K562 (cell line): ENCODE measurements at regions of chr7 and their contacts with region 1.

Region 1: DNA sequence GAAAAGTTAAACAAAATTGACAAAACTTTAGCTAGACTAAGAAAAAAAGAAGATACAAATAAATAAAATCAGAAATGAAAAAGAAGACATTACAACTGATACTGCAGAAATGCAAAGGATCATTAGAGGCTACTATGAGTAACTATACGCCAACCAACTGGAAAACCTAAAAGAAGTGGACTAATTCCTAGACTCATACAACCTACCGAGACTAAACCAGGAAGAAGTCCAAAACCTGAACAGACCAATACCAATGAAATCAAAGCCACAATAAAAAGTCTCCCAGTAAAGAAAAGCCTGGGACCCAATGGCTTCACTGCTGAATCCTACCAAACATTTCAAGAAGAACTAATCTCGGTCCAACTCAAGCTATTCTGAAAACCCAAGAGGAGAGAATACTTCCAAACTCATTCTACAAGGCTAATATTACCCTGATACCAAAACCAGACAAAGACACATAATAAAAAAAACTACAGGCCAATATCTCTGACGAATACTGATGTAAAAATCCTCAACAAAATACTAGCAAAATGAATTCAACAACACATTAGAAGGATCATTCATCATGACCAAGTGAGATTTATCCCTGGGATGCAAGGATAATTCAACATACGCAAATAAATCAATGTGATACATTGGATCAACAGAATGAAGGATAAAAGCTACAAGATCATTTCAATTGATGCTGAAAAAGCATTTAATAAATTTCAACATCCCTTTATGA is 20.3 kb downstream of the ELAPOR2 start:
- DNase-seq: peak in 1 of 4 experiments; percentile 21
- ATAC-seq: peak; percentile 79
- H3K4me3 ChIP-seq: peak overlapping the region; percentile 52
- H3K27ac ChIP-seq: peak overlapping the region; percentile 61; the same call in 2 of the 3 replicates
- H3K4me1 ChIP-seq: peaks cover 0 to 15% of the 10 kb centered on the region in 2 experiments; a peak in 3 of 5 replicates
- H3K27me3 ChIP-seq: no peaks in the 10 kb centered on the region
- CTCF ChIP-seq: no peak
- EP300 ChIP-seq: no peak
- POLR2A ChIP-seq: no peak
- RAD21 ChIP-seq: no peak

Region 2: GRCh38 chr7:86932038-86932512 is 107.1 kb before region 1 on chr7:
- CTCF ChIA-PET with region 1: no interaction called
- POLR2A ChIA-PET with region 1: no interaction called
- in situ Hi-C with region 1: no loop called
- intact Hi-C with region 1: loop called (anchors 2 kb)
- DNase-seq: no peak
- ATAC-seq: peak; percentile 31; the same call in 2 of the 3 replicates
- H3K4me3 ChIP-seq: no peak overlapping the region
- H3K27ac ChIP-seq: no peak overlapping the region; the same call in 2 of the 3 replicates
- H3K4me1 ChIP-seq: peaks cover 4 to 15% of the 10 kb centered on the region in 2 experiments; a peak in 3 of 5 replicates
- H3K27me3 ChIP-seq: no peaks in the 10 kb centered on the region
- CTCF ChIP-seq: no peak
- EP300 ChIP-seq: no peak
- POLR2A ChIP-seq: no peak
- RAD21 ChIP-seq: no peak

Region 3: GRCh38 chr7:86939197-86939814 is 99.8 kb before region 1 on chr7:
- CTCF ChIA-PET with region 1: no interaction called
- POLR2A ChIA-PET with region 1: no interaction called
- in situ Hi-C with region 1: no loop called
- intact Hi-C with region 1: loop called (anchors 2 kb)
- DNase-seq: peak; percentile 33 to 82 (median 42)
- ATAC-seq: peak; percentile 87
- H3K4me3 ChIP-seq: no peak overlapping the region
- H3K27ac ChIP-seq: no peak overlapping the region
- H3K4me1 ChIP-seq: peaks cover 0 to 9% of the 10 kb centered on the region in 2 experiments; a peak in 2 of 5 replicates
- H3K27me3 ChIP-seq: no peaks in the 10 kb centered on the region
- CTCF ChIP-seq: peak; percentile 59 to 83 (median 78); a peak in 5 of 6 replicates
- EP300 ChIP-seq: no peak
- POLR2A ChIP-seq: no peak
- RAD21 ChIP-seq: peak; percentile 87 to 88

Region 4: GRCh38 chr7:87027900-87028299 is 11.3 kb before region 1 on chr7:
- CTCF ChIA-PET with region 1: no interaction called
- POLR2A ChIA-PET with region 1: interaction called, 24 read pairs
- in situ Hi-C with region 1: no loop called
- intact Hi-C with region 1: no loop called
- DNase-seq: no peak
- ATAC-seq: no peak
- H3K4me3 ChIP-seq: no peak overlapping the region
- H3K27ac ChIP-seq: no peak overlapping the region
- H3K4me1 ChIP-seq: peaks cover 0 to 7% of the 10 kb centered on the region in 2 experiments; a peak in 2 of 5 replicates
- H3K27me3 ChIP-seq: no peaks in the 10 kb centered on the region
- CTCF ChIP-seq: no peak
- EP300 ChIP-seq: no peak
- POLR2A ChIP-seq: no peak
- RAD21 ChIP-seq: no peak

Region 5: GRCh38 chr7:87225696-87226095 is 186.5 kb after region 1 on chr7:
- CTCF ChIA-PET with region 1: no interaction called
- POLR2A ChIA-PET with region 1: no interaction called
- in situ Hi-C with region 1: no loop called
- intact Hi-C with region 1: no loop called
- DNase-seq: no peak
- ATAC-seq: 0 out of 3 replicates have a peak, but pooled peaks have one; percentile 32
- H3K4me3 ChIP-seq: no peak overlapping the region
- H3K27ac ChIP-seq: no peak overlapping the region
- H3K4me1 ChIP-seq: peaks cover 0 to 2% of the 10 kb centered on the region in 2 experiments; a peak in 2 of 5 replicates
- H3K27me3 ChIP-seq: peaks cover 23 to 26% of the 10 kb centered on the region in 2 experiments; a peak in 4 of 5 replicates
- CTCF ChIP-seq: no peak
- EP300 ChIP-seq: no peak
- POLR2A ChIP-seq: no peak
- RAD21 ChIP-seq: no peak